ENCODE measurements at regions of chr7 and their contacts with region 1.

Region 1: DNA sequence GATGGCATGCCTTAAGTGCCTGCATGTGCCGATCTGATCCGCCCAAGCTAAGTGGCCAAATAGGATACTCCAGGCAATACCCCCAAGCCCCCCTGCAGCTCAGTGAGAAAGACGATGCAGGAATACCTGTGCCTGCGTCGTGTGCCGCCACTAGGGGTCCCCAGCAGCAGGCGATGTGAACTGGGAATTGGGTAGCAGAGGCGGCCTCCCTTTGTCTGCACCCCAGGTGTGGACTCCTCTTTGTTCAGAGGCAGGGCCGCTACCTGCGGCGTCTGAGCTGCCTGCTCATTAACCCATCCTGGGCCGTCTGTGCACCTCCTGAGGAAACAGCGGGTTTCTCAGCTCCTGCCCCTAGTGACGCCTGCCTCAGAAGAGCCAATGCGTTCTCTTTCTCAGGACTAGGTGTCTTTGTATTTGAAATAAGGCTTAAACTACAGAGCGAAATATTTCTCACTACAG is 4.8 kb upstream of the CHN2 start:
- DNase-seq: peak; percentile 26 to 79 (median 69)
- ATAC-seq: peak; percentile 78
- H3K4me3 ChIP-seq: no peak overlapping the region
- H3K4me3 Mint-ChIP-seq: no peak overlapping the region
- H3K27ac ChIP-seq: no peak overlapping the region
- H3K27ac Mint-ChIP-seq: no peak overlapping the region
- H3K4me1 ChIP-seq: no peaks in the 10 kb centered on the region
- H3K4me1 Mint-ChIP-seq: peaks cover 4% of the 10 kb centered on the region
- H3K27me3 ChIP-seq: no peaks in the 10 kb centered on the region
- H3K27me3 Mint-ChIP-seq: peaks cover 6% of the 10 kb centered on the region
- CTCF ChIP-seq: peak; percentile 78

Region 2: GRCh38 chr7:28926871-28927597 is 262.7 kb before region 1 on chr7:
- CTCF ChIA-PET with region 1: interaction called, 21 read pairs
- POLR2A ChIA-PET with region 1: no interaction called
- intact Hi-C with region 1: loop called (anchors 2 kb)
- DNase-seq: peak; percentile 2 to 83 (median 44)
- ATAC-seq: peak; percentile 92
- H3K4me3 ChIP-seq: peak overlapping the region; percentile 42 to 55
- H3K4me3 Mint-ChIP-seq: peak overlapping the region; percentile 92
- H3K27ac ChIP-seq: no peak overlapping the region
- H3K27ac Mint-ChIP-seq: no peak overlapping the region
- H3K4me1 ChIP-seq: peaks cover 13% of the 10 kb centered on the region
- H3K4me1 Mint-ChIP-seq: peaks cover 20% of the 10 kb centered on the region
- H3K27me3 ChIP-seq: no peaks in the 10 kb centered on the region
- H3K27me3 Mint-ChIP-seq: peaks cover 11% of the 10 kb centered on the region
- CTCF ChIP-seq: peak; percentile 72

Region 3: DNA sequence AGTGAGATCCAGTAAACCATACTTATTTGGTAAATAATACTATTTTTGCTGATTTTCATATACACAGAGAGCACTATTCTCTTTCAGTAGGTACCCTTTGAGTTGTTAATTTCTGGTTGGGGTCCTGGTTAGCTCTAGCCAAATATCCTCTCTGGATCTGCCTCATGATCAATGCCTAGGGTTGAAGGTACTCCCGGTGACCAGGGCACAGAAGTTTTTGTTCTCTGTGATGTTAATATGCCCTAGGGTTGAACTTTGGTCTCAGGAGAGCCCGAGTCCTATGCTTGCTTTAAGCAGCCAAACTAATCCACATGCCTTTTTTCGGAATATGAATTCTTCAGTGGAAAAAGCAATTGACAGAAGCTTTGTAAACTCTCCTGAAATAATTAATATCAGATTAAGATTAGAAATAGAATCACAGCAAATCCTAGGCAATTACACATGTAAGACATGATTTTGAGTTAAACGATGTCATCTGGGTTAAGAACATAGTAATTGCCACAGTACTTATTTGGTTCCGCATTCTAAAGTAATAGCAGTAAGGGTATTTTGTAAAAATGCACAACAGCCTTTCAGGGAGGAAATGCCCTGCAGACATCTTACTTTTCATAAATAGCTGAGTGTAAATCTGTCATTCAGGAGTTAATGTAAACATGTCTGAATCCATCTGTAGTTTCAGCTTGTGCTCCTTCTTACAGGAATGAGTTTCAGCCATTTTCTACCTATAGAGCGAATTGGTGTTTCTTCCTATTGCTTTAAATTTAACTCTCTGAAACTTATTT is 14.9 kb after region 1 on chr7:
- CTCF ChIA-PET with region 1: interaction called, 19 read pairs
- POLR2A ChIA-PET with region 1: no interaction called
- intact Hi-C with region 1: no loop called
- DNase-seq: no peak
- ATAC-seq: no peak
- H3K4me3 ChIP-seq: no peak overlapping the region
- H3K4me3 Mint-ChIP-seq: no peak overlapping the region
- H3K27ac ChIP-seq: no peak overlapping the region
- H3K27ac Mint-ChIP-seq: no peak overlapping the region
- H3K4me1 ChIP-seq: peaks cover 10% of the 10 kb centered on the region
- H3K4me1 Mint-ChIP-seq: peaks cover 27% of the 10 kb centered on the region
- H3K27me3 ChIP-seq: no peaks in the 10 kb centered on the region
- H3K27me3 Mint-ChIP-seq: no peaks in the 10 kb centered on the region
- CTCF ChIP-seq: no peak

Region 4: DNA sequence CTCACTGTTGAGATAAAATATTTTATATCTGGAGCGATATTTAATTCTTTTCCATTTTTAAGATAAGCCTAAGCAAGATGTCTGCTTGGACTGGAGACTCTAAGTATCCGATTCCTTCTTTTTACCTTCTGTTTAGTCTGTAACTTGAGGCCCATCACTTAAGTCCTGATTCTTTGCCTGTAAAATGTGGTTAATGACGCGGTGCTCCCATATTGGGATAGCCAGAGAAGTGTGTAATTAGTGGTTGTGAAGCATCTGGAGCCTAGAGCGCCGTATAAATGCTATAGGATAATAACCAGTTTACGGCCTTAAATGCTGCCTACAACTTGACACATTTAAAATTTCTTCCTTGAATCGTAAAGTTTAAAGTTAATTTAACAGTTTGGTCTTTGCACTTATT is 137.7 kb after region 1 on chr7:
- CTCF ChIA-PET with region 1: interaction called, 10 read pairs
- POLR2A ChIA-PET with region 1: no interaction called
- intact Hi-C with region 1: no loop called
- DNase-seq: no peak
- ATAC-seq: no peak
- H3K4me3 ChIP-seq: no peak overlapping the region
- H3K4me3 Mint-ChIP-seq: no peak overlapping the region
- H3K27ac ChIP-seq: no peak overlapping the region
- H3K27ac Mint-ChIP-seq: no peak overlapping the region
- H3K4me1 ChIP-seq: no peaks in the 10 kb centered on the region
- H3K4me1 Mint-ChIP-seq: peaks cover 28% of the 10 kb centered on the region
- H3K27me3 ChIP-seq: no peaks in the 10 kb centered on the region
- H3K27me3 Mint-ChIP-seq: no peaks in the 10 kb centered on the region
- CTCF ChIP-seq: no peak

Region 5: GRCh38 chr7:29345600-29345999 is 155.8 kb after region 1 on chr7:
- CTCF ChIA-PET with region 1: interaction called, 56 read pairs
- POLR2A ChIA-PET with region 1: no interaction called
- intact Hi-C with region 1: loop called (anchors 1 to 2 kb)
- DNase-seq: peak in 6 of 9 experiments; percentile 15 to 55 (median 40)
- ATAC-seq: peak; percentile 48
- H3K4me3 ChIP-seq: no peak overlapping the region
- H3K4me3 Mint-ChIP-seq: no peak overlapping the region
- H3K27ac ChIP-seq: no peak overlapping the region
- H3K27ac Mint-ChIP-seq: no peak overlapping the region
- H3K4me1 ChIP-seq: peaks cover 11% of the 10 kb centered on the region
- H3K4me1 Mint-ChIP-seq: peaks cover 4% of the 10 kb centered on the region
- H3K27me3 ChIP-seq: no peaks in the 10 kb centered on the region
- H3K27me3 Mint-ChIP-seq: no peaks in the 10 kb centered on the region
- CTCF ChIP-seq: no peak

Region 6: GRCh38 chr7:29408841-29409243 is 219.1 kb after region 1 on chr7:
- CTCF ChIA-PET with region 1: interaction called, 285 read pairs
- POLR2A ChIA-PET with region 1: interaction called, 3 read pairs
- intact Hi-C with region 1: loop called (anchors 1 kb)
- DNase-seq: peak; percentile 5 to 77 (median 55)
- ATAC-seq: peak; percentile 67
- H3K4me3 ChIP-seq: no peak overlapping the region
- H3K4me3 Mint-ChIP-seq: no peak overlapping the region
- H3K27ac ChIP-seq: no peak overlapping the region
- H3K27ac Mint-ChIP-seq: no peak overlapping the region
- H3K4me1 ChIP-seq: no peaks in the 10 kb centered on the region
- H3K4me1 Mint-ChIP-seq: no peaks in the 10 kb centered on the region
- H3K27me3 ChIP-seq: no peaks in the 10 kb centered on the region
- H3K27me3 Mint-ChIP-seq: peaks cover 4% of the 10 kb centered on the region
- CTCF ChIP-seq: peak; percentile 86

Measured in CD8-positive, alpha-beta T cell (primary cell).